ENCODE measurements at regions of chr11 and their contacts with region 1.

Region 1: GRCh38 chr11:27339941-27340340 is 23.1 kb downstream of the CCDC34 start:
- DNase-seq: peak in 1 of 5 donors; percentile 18
- ATAC-seq: peak; percentile 85 to 99 (median 96)
- H3K4me3 ChIP-seq: no peak overlapping the region
- H3K27ac ChIP-seq: peak overlapping the region in 1 of 12 donors; percentile 1
- H3K4me1 ChIP-seq: peaks cover 0 to 8% (median 0%) of the 10 kb centered on the region in 12 donors
- H3K27me3 ChIP-seq: no peaks in the 10 kb centered on the region
- CTCF ChIP-seq: no peak
- POLR2A ChIP-seq: no peak

Region 2: GRCh38 chr11:27392278-27393114 is 52.6 kb after region 1 on chr11:
- intact Hi-C with region 1: loop called in 1 of 10 experiments (anchors 5 kb)
- DNase-seq: no peak
- ATAC-seq: peak; percentile 57 to 71 (median 65)
- H3K4me3 ChIP-seq: no peak overlapping the region
- H3K27ac ChIP-seq: peak overlapping the region in 7 of 12 donors; percentile 5 to 35 (median 23)
- H3K4me1 ChIP-seq: peaks cover 0 to 58% (median 5%) of the 10 kb centered on the region in 12 donors
- H3K27me3 ChIP-seq: no peaks in the 10 kb centered on the region
- CTCF ChIP-seq: no peak
- POLR2A ChIP-seq: no peak

Region 3: DNA sequence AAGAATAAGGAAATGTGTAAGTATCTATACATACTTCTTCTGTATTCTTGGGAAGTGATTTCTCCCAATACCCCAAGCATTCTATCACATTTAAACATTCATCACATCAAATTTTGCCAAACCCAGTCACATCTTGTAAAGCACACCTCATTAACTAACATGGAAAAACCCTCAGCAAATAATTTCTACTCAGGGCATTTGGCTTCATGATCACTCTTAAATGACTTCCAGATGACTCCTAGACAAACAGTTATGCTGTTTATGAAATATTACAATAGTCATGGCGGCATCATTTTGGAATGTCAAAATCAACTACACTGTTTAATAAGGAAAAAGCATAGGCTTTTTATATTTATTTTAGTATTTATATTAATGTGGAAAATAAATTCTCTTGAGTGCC is 70.3 kb after region 1 on chr11:
- intact Hi-C with region 1: no loop called
- DNase-seq: no peak
- ATAC-seq: no peak
- H3K4me3 ChIP-seq: no peak overlapping the region
- H3K27ac ChIP-seq: no peak overlapping the region
- H3K4me1 ChIP-seq: peaks cover 0 to 44% (median 6%) of the 10 kb centered on the region in 12 donors
- H3K27me3 ChIP-seq: no peaks in the 10 kb centered on the region
- CTCF ChIP-seq: no peak
- POLR2A ChIP-seq: no peak

Measured in heart left ventricle (tissue), 16 donors.